Endothelial cell of umbilical vein (primary cell): ENCODE measurements at regions of chr7 and their contacts with region 1.

Region 1: DNA sequence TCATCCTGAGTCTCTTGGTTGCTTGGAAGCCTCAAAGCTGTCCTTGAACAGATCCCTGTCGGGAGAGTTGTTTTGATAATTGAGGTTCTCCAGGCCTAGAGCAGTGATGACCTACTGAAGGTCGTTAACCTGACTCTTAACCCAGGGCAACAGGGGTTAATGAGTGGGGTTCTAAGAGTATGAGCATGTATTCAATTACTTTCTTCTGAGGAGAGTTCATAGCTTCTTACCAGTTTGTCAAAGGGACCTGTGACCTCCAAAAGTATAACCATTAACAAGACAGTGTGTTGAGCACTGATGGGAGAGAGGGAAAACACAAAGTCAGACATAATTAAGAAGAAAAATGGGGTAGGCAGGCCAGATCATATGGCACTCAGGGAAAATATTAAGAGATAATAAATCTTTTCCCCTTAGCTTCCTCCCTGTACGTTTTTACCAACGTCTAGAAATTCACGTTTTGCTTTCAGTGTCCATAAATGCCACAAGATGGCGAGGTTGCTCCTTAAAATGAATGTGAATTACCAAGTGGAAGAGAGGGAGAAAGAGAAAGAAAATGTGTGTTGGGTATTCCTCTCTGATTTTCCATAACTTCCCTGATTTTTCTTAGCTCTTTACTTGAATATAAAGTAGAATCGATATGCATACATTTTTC is 97.6 kb downstream of the SUGCT start:
- DNase-seq: peak; percentile 79
- H3K4me3 ChIP-seq: no peak overlapping the region
- H3K27ac ChIP-seq: no peak overlapping the region
- H3K4me1 ChIP-seq: no peaks in the 10 kb centered on the region
- H3K27me3 ChIP-seq: no peaks in the 10 kb centered on the region
- CTCF ChIP-seq: peak; percentile 42 to 43
- POLR2A ChIP-seq: no peak

Region 2: GRCh38 chr7:39845006-39845405 is 387.4 kb before region 1 on chr7:
- CTCF ChIA-PET with region 1: no interaction called
- POLR2A ChIA-PET with region 1: no interaction called
- dilution Hi-C with region 1: no loop called
- intact Hi-C with region 1: no loop called
- DNase-seq: no peak
- H3K4me3 ChIP-seq: no peak overlapping the region
- H3K27ac ChIP-seq: no peak overlapping the region
- H3K4me1 ChIP-seq: no peaks in the 10 kb centered on the region
- H3K27me3 ChIP-seq: peaks cover 3 to 6% of the 10 kb centered on the region in 2 experiments
- CTCF ChIP-seq: no peak
- POLR2A ChIP-seq: no peak

Region 3: GRCh38 chr7:40221836-40222235 is 10.5 kb before region 1 on chr7:
- CTCF ChIA-PET with region 1: interaction called, 38 read pairs
- POLR2A ChIA-PET with region 1: no interaction called
- dilution Hi-C with region 1: no loop called
- intact Hi-C with region 1: no loop called
- DNase-seq: no peak
- H3K4me3 ChIP-seq: no peak overlapping the region
- H3K27ac ChIP-seq: peak overlapping the region; percentile 67
- H3K4me1 ChIP-seq: peaks cover 19% of the 10 kb centered on the region
- H3K27me3 ChIP-seq: no peaks in the 10 kb centered on the region
- CTCF ChIP-seq: no peak
- POLR2A ChIP-seq: no peak

Region 4: GRCh38 chr7:40329601-40330153 is 97.3 kb after region 1 on chr7:
- CTCF ChIA-PET with region 1: interaction called, 68 read pairs
- POLR2A ChIA-PET with region 1: no interaction called
- dilution Hi-C with region 1: no loop called
- intact Hi-C with region 1: loop called (anchors 1 kb)
- DNase-seq: peak; percentile 72
- H3K4me3 ChIP-seq: no peak overlapping the region
- H3K27ac ChIP-seq: no peak overlapping the region
- H3K4me1 ChIP-seq: peaks cover 2% of the 10 kb centered on the region
- H3K27me3 ChIP-seq: no peaks in the 10 kb centered on the region
- CTCF ChIP-seq: peak; percentile 42 to 47
- POLR2A ChIP-seq: no peak

Region 5: GRCh38 chr7:40604601-40605438 is 372.5 kb after region 1 on chr7:
- CTCF ChIA-PET with region 1: interaction called, 264 read pairs
- POLR2A ChIA-PET with region 1: no interaction called
- dilution Hi-C with region 1: no loop called
- intact Hi-C with region 1: loop called (anchors 1 kb)
- DNase-seq: peak; percentile 65
- H3K4me3 ChIP-seq: no peak overlapping the region
- H3K27ac ChIP-seq: no peak overlapping the region
- H3K4me1 ChIP-seq: no peaks in the 10 kb centered on the region
- H3K27me3 ChIP-seq: no peaks in the 10 kb centered on the region
- CTCF ChIP-seq: peak; percentile 92 to 96
- POLR2A ChIP-seq: no peak

Region 6: DNA sequence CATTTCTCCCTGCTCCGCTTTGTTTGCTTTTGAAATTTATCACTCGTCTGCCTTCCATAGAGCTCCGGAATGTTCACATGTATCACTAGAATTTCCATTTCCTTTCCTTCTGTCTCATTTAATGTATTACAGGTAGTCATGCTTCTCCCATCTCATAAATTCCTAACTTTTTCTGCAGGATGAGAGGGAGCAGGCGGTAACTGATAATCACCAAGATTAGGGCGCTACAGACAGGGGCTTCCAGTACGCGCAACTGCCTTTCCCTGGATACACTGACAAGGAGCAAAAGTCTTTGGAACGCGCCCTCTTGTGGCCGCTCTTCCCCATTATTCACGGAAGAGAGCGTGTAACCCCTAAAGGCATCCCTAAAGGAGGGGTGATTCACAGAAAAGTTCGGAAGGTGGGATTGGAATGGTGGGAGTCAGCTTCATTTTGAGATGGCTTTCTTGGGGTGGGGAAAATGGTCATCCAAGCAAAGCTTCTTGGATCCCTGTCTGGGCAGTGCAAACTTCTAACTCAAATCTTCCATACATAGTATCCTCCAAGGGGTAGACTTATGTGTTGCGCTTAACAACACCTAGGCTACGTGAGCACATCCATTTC is 1464.0 kb after region 1 on chr7:
- CTCF ChIA-PET with region 1: interaction called, 17 read pairs
- POLR2A ChIA-PET with region 1: no interaction called
- dilution Hi-C with region 1: no loop called
- intact Hi-C with region 1: no loop called
- DNase-seq: peak; percentile 94
- H3K4me3 ChIP-seq: peak overlapping the region; percentile 24 to 94 (median 31)
- H3K27ac ChIP-seq: peak overlapping the region; percentile 98
- H3K4me1 ChIP-seq: peaks cover 53% of the 10 kb centered on the region
- H3K27me3 ChIP-seq: no peaks in the 10 kb centered on the region
- CTCF ChIP-seq: peak; percentile 76 to 87
- POLR2A ChIP-seq: peak; percentile 49

Region 7: GRCh38 chr7:41731492-41732435 is 1499.4 kb after region 1 on chr7:
- CTCF ChIA-PET with region 1: interaction called, 26 read pairs
- POLR2A ChIA-PET with region 1: no interaction called
- dilution Hi-C with region 1: no loop called
- intact Hi-C with region 1: loop called (anchors 1 kb)
- DNase-seq: peak; percentile 33
- H3K4me3 ChIP-seq: no peak overlapping the region
- H3K27ac ChIP-seq: no peak overlapping the region
- H3K4me1 ChIP-seq: no peaks in the 10 kb centered on the region
- H3K27me3 ChIP-seq: peaks cover 3 to 4% of the 10 kb centered on the region in 2 experiments
- CTCF ChIP-seq: peak; percentile 5 to 8
- POLR2A ChIP-seq: no peak